Right ventricle myocardium inferior (tissue), 1 donor: ENCODE measurements at regions of chr13 and their contacts with region 1.

Region 1: DNA sequence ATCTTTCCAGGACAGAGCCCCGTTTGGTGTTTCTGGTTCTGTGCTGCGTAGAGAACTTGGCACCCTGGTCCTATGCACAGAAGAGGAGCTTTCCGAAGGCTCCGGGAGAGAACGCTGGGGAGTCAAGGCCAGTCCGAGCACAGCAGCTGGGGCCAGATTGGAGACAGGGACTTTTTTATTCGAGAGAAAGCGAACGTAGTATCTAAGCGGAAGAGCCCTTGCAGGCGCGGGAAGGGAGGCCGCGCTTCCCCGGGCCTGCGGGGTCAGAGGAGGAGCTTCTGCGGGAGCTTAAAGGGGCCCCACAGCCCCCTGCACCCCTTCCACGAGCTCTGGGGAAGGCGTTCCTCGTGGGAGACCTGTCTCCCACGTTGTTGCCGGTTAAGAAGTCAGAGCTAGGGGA is 48.6 kb upstream of the ARHGEF7 start:
- DNase-seq: no peak
- ATAC-seq: peak; percentile 74

Region 2: GRCh38 chr13:111153279-111153976 is 86.9 kb after region 1 on chr13:
- intact Hi-C with region 1: loop called (anchors 5 kb)
- DNase-seq: peak; percentile 94
- ATAC-seq: peak; percentile 97

Region 3: GRCh38 chr13:111281751-111282311 is 215.3 kb after region 1 on chr13:
- intact Hi-C with region 1: loop called (anchors 10 kb)
- DNase-seq: no peak
- ATAC-seq: peak; percentile 20

Region 4: DNA sequence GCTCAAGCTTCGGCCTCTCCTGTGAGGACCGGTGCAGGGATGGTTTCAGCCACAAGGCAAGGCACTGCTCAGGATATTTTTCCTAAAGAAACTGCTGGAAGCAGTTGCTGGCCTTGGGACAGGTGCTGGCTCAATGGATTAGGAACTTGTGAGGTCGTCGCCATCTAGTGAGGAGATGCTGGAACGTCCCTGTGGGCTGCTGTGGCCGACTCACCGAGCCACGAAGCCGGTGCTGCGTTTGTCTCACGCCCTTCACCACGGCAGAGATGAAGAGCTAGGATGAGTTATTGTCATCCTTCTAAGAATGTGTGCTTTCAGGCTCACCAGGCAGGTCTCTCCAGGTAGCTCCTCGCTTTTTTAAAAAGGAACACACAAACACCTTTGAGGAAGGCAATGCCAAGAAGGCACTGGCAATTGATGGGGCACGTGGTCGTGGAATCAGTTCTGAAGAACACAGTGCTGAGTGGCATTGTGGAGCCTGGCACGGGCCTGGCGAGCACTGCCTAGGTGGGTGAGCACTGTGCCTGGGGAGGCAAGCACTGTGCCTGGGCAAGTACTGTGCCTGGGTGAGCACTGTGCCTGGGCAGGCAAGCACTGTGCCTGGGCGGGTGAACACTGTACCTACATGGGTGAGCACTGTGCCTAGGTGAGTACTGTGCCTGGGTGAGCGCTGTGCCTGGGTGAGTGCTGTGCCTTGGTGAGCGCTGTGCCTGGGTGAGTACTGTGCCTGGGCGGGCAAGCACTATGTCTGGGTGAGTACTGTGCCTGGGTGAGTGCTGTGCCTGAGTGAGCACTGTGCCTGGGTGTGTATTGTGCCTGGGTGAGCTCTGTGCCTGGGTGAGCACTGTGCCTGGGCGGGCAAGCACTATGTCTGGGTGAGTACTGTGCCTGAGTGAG is 394.3 kb after region 1 on chr13:
- intact Hi-C with region 1: loop called (anchors 10 kb)
- DNase-seq: no peak
- ATAC-seq: peak; percentile 77